Left cardiac atrium (tissue), 4 donors: ENCODE measurements at regions of chr1 and their contacts with region 1.

Region 1: DNA sequence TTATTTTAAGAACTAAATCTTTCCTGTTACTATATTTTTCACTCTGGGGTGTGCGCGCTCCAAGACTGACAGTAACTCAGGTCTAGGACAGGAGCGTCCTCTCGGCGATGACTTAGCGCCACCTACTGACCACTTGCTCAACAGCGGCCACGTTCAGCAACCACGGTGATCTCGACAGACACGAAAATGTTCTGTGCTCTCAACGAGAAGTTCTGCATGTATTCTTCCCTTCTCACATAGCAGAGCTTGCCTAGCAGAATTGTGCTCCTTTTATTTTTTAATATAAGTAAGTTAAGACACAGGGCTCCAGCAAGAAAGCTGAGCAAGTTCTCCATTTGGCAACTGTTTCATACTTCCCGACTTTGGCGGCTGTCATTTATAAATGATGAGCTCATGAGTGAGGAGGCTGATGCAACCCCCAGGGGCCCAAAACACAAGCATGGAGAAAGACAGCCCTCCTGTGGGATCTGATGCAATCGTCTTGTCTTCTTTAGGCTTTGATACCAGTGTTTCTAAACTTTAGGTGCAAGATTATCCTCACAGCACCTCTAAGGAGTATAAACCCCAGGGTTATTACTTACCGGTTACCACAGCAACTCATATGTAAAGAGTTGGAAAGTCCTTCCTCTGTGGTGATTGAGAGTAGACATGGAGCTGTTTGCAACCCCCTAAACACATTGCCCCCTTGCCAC is 92.6 kb downstream of the HHIPL2 start:
- DNase-seq: peak; percentile 87
- ATAC-seq: peak; percentile 95 to 96

Region 2: DNA sequence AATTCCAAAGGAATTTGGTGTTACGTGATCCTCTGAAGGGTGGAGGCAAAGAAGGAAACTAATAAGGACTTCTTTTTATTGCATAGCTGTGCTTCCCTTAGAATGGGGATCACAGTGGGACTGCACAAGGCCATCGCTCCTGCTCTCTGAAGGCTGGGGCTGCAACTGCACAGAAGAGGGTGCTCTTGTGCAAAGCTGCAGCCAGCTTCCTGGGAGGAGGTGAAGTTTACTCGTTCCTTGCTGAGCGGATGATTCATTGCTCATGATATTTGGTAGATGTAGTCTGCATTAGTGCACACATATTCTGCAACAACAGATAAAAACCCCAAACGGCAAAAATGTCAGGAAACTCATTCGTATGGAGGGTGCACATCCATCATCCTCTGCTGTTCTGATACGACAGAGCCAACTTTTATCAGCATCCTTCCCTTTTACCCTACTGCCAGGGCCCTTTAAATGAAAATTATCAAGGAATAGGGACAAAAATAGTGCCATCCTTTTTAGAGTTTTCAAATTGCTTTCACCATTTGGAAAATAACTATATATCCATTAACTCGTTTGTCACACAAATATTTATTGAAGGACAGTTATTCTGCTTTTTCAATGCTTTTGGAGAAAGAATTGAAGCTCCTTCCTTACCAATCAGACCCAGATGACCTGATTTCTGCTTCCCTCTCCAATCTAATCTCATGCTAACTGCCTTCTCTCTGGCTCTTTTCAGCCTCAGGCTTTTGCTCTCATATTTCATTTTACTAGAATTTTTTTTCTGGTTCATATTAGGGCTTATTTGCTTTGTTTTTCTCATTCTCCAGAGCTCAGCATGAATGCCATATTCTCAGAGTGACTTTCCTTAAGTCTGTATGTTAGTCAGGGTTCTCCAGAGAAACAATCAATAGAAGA is 977.0 kb before region 1 on chr1:
- intact Hi-C with region 1: loop called in 1 of 2 experiments (anchors 2 kb)
- DNase-seq: peak; percentile 44
- ATAC-seq: peak; percentile 84 to 97

Region 3: GRCh38 chr1:222095606-222096475 is 359.5 kb before region 1 on chr1:
- intact Hi-C with region 1: loop called in 1 of 2 experiments (anchors 5 kb)
- DNase-seq: peak; percentile 25
- ATAC-seq: peak; percentile 15 to 26

Region 4: GRCh38 chr1:222404710-222405109 is 50.6 kb before region 1 on chr1:
- intact Hi-C with region 1: no loop called
- DNase-seq: no peak
- ATAC-seq: no peak